ENCODE measurements at regions of chrX and their contacts with region 1.

Region 1: GRCh38 chrX:72126539-72127140 is 5.1 kb downstream of the RTL5 start:
- H3K4me3 ChIP-seq: no peak overlapping the region
- H3K27ac ChIP-seq: no peak overlapping the region
- H3K4me1 ChIP-seq: peaks cover 6% of the 10 kb centered on the region; the same call in 1 of the 2 replicates
- CTCF ChIP-seq: peak; percentile 96

Region 2: DNA sequence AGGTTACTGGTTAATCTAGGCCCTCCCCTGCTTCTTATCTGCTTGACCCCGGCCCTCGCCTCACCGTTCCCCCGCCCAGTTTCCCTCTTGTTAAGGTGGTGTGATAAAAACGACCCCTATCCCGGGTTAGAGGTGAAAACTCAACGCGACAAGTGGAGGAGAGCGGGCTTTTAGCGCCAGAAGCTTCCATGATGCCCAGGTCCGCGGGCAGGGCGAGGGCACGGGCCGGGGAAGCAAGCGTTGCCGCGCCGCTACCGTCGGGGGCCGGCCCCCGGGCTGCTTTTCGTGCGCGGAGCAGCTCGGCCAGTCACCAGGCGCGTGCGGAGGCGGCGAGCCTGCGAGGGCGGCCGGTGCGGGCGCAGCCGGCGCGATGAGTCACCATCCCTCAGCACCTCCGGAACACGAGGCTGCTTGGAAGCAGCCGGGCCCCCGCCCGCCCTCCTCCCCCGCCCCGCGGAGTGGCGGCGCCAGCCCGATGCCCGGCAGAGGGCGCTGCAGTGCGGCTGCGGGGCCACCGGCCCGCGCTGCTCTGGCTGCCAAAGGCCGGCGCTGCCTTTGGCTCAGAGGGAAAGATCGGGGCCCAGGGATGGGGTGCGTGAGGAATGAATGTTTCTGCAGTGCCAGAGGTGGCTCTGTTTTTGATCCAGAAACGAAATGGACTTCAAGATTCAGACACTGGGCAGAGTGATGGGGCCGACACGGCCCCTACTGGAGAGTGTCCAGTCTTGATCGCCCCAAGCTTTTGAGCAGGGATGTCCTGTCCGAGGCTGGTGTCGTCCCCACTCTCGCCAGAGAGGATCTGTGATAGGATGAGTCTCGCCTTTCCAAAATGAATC is 108.1 kb before region 1 on chrX:
- CTCF ChIA-PET with region 1: interaction called, 118 read pairs
- POLR2A ChIA-PET with region 1: interaction called, 7 read pairs
- H3K4me3 ChIP-seq: no peak overlapping the region
- H3K27ac ChIP-seq: no peak overlapping the region
- H3K4me1 ChIP-seq: no peaks in the 10 kb centered on the region
- CTCF ChIP-seq: no peak; the same call in 1 of the 2 replicates

Region 3: DNA sequence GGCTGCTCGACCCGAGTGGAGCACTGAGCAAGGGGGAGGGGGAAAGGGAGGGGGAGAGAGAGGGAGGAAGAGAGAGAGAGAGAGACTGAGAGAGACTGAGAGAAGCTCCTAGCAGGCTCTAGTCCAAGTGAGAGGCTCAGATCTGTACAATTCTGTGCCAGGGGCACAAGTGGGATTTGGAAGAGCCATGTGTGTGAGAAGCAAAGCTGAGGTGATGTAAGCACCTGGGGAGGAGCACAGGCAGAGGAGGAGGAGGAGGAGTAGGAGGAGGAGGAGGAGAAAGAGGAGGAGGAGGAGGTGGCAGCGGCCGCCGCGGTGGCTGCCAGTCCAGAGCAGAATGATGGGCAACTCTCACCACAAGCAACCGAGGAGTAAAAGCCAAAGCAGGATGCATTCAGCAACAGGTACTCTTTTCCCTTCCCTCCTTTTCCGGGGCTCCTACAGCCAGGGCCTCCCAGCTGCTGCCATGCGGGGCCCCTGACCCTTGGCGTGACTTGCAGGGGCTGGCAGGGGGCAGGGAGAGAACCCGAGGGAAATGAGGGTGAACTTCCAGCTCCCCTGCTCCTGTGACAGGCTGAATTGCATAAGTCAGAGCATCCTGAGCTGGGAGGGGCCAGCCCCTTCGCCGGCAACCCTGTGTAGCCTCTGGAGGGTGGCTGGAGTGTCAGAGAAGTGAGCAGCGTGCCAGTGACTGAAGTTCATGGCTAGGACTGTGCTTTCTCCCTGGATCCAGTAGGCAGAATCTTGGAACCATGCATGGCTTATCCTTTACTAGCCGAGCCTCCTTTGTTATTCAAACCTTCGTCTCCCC is 57.1 kb before region 1 on chrX:
- CTCF ChIA-PET with region 1: interaction called, 12 read pairs
- POLR2A ChIA-PET with region 1: no interaction called
- H3K4me3 ChIP-seq: no peak overlapping the region
- H3K27ac ChIP-seq: no peak overlapping the region
- H3K4me1 ChIP-seq: peaks cover 3% of the 10 kb centered on the region; the same call in 1 of the 2 replicates
- CTCF ChIP-seq: no peak

Region 4: GRCh38 chrX:72142094-72142793 is 15.6 kb after region 1 on chrX:
- CTCF ChIA-PET with region 1: interaction called, 11 read pairs
- POLR2A ChIA-PET with region 1: no interaction called
- H3K4me3 ChIP-seq: no peak overlapping the region
- H3K27ac ChIP-seq: no peak overlapping the region
- H3K4me1 ChIP-seq: no peaks in the 10 kb centered on the region
- CTCF ChIP-seq: no peak

Measured in HEK293 (cell line).